ENCODE measurements at regions of chr10 and their contacts with region 1.

Region 1: DNA sequence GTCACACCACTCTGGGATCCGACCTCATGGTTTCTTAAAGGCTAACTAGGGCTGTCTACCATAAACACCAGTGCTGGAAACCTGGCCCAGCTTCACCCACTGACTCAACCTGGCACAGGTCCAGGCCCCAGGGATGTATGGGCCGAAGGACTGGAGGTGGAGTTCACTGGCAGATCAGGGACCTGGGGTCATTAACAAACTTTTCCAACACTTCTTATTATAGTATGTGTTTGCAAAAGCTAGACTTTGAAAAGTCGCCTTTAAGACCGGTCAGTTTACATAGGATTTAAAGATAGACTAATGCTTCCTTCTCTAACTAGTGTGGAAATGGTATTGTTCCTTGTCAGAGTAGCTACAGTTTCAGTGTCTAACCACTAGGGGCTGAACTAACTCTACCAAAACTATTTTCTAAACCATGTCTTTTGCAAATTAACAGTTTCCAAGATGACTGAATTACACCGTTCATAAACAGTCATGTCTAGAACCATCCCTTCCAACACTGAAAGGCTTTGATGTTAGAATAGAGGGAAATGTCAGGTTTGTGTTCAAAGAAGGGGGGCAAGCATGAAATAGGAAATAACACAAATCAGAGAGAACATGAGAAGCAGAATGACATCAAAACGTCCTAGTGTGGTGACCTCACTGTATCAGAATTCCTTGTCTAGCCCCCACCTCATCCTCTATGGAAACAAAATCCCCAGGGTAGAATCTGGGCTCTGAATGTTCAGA is 29.7 kb downstream of the STN1 start:
- DNase-seq: peak in 3 of 35 experiments; percentile 10 to 74 (median 25)
- ATAC-seq: peak; percentile 74 to 82 (median 80)
- H3K4me3 ChIP-seq: no peak overlapping the region
- H3K4me3 Mint-ChIP-seq: no peak overlapping the region
- H3K27ac ChIP-seq: no peak overlapping the region
- H3K27ac Mint-ChIP-seq: peak overlapping the region; percentile 82 to 91
- H3K4me1 ChIP-seq: peaks cover 2 to 12% of the 10 kb centered on the region in 2 experiments
- H3K4me1 Mint-ChIP-seq: peaks cover 24 to 39% (median 25%) of the 10 kb centered on the region in 3 donors
- H3K27me3 ChIP-seq: no peaks in the 10 kb centered on the region
- H3K27me3 Mint-ChIP-seq: no peaks in the 10 kb centered on the region

Region 2: GRCh38 chr10:103816431-103816830 is 71.8 kb before region 1 on chr10:
- CTCF ChIA-PET with region 1: no interaction called
- POLR2A ChIA-PET with region 1: no interaction called
- DNase-seq: no peak
- ATAC-seq: no peak
- H3K4me3 ChIP-seq: no peak overlapping the region
- H3K4me3 Mint-ChIP-seq: no peak overlapping the region
- H3K27ac ChIP-seq: no peak overlapping the region
- H3K27ac Mint-ChIP-seq: no peak overlapping the region
- H3K4me1 ChIP-seq: no peaks in the 10 kb centered on the region
- H3K4me1 Mint-ChIP-seq: no peaks in the 10 kb centered on the region
- H3K27me3 ChIP-seq: peaks cover 0 to 17% of the 10 kb centered on the region in 2 experiments
- H3K27me3 Mint-ChIP-seq: peaks cover 10 to 12% of the 10 kb centered on the region in 2 donors

Region 3: GRCh38 chr10:103918053-103918846 is 30.0 kb after region 1 on chr10 and contains the start of gene STN1:
- CTCF ChIA-PET with region 1: interaction called, 4 to 15 read pairs
- POLR2A ChIA-PET with region 1: interaction called in 1 of 2 experiments, 3 read pairs
- DNase-seq: peak; percentile 88 to 96 (median 93)
- ATAC-seq: peak; percentile 94 to 95 (median 94)
- H3K4me3 ChIP-seq: peak within 1 kb of the TSS; percentile 90 to 91
- H3K4me3 Mint-ChIP-seq: peak within 1 kb of the TSS; percentile 93 to 98 (median 94)
- H3K27ac ChIP-seq: peak within 1 kb of the TSS; percentile 85
- H3K27ac Mint-ChIP-seq: peak within 1 kb of the TSS; percentile 96 to 99
- H3K4me1 ChIP-seq: peaks cover 23 to 43% of the 10 kb centered on the region in 2 experiments
- H3K4me1 Mint-ChIP-seq: peaks cover 38 to 42% (median 39%) of the 10 kb centered on the region in 3 donors
- H3K27me3 ChIP-seq: no peaks in the 10 kb centered on the region
- H3K27me3 Mint-ChIP-seq: no peaks in the 10 kb centered on the region
- total RNA-seq, gene STN1: 37.6 to 47.5 (median 41.8) TPM

Region 4: DNA sequence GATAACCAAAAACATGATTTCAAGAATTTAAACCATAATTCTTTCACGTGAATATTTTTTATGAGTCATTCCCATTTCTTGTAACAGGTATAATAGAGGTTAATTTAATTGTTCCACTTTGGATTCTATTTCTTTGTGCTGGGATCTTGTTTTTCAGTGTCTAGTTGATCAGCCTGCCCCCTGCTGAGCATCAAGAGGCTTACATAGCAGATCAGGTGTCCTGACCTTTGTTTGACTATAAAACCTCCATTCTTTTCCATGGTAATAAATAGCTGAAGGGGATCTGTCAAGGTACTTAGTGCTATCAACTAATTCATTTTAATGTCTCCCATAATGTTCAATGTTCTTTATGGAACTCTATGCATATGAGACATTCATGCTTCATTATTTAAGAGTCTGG is 192.5 kb after region 1 on chr10:
- CTCF ChIA-PET with region 1: interaction called, 4 to 13 read pairs
- POLR2A ChIA-PET with region 1: no interaction called
- DNase-seq: peak in 3 of 35 experiments; percentile 6 to 53 (median 7)
- ATAC-seq: peak in 2 of 4 experiments; percentile 30 to 42
- H3K4me3 ChIP-seq: no peak overlapping the region
- H3K4me3 Mint-ChIP-seq: no peak overlapping the region
- H3K27ac ChIP-seq: no peak overlapping the region
- H3K27ac Mint-ChIP-seq: peak overlapping the region in 1 of 2 donors; percentile 14
- H3K4me1 ChIP-seq: no peaks in the 10 kb centered on the region
- H3K4me1 Mint-ChIP-seq: no peaks in the 10 kb centered on the region
- H3K27me3 ChIP-seq: peaks cover 0 to 7% of the 10 kb centered on the region in 2 experiments
- H3K27me3 Mint-ChIP-seq: no peaks in the 10 kb centered on the region

Measured in T-cell (primary cell).